ENCODE measurements at regions of chr3 and their contacts with region 1.

Region 1: GRCh38 chr3:141738022-141738890 is at the start of gene RNF7:
- DNase-seq: peak; percentile 95 to 98 (median 98)
- ATAC-seq: peak; percentile 96
- H3K4me3 ChIP-seq: peak within 1 kb of the TSS; percentile 94
- H3K4me3 Mint-ChIP-seq: peak within 1 kb of the TSS; percentile 92 to 100 (median 98)
- H3K27ac ChIP-seq: peak within 1 kb of the TSS; percentile 95
- H3K27ac Mint-ChIP-seq: peak within 1 kb of the TSS; percentile 92 to 99 (median 98)
- H3K4me1 ChIP-seq: peaks cover 20 to 25% of the 10 kb centered on the region in 2 donors
- H3K4me1 Mint-ChIP-seq: peaks cover 21 to 47% (median 44%) of the 10 kb centered on the region in 7 donors
- H3K27me3 ChIP-seq: no peaks in the 10 kb centered on the region
- H3K27me3 Mint-ChIP-seq: peaks cover 0 to 5% (median 0%) of the 10 kb centered on the region in 5 donors
- total RNA-seq, gene RNF7: 45.6 to 63.2 (median 57.3) TPM

Region 2: GRCh38 chr3:140332131-140332530 is 1406.1 kb before region 1 on chr3:
- CTCF ChIA-PET with region 1: no interaction called
- POLR2A ChIA-PET with region 1: no interaction called
- intact Hi-C with region 1: no loop called
- DNase-seq: no peak
- ATAC-seq: no peak
- H3K4me3 ChIP-seq: no peak overlapping the region
- H3K4me3 Mint-ChIP-seq: no peak overlapping the region
- H3K27ac ChIP-seq: no peak overlapping the region
- H3K27ac Mint-ChIP-seq: no peak overlapping the region
- H3K4me1 ChIP-seq: no peaks in the 10 kb centered on the region
- H3K4me1 Mint-ChIP-seq: no peaks in the 10 kb centered on the region
- H3K27me3 ChIP-seq: no peaks in the 10 kb centered on the region
- H3K27me3 Mint-ChIP-seq: peaks cover 5 to 26% (median 12%) of the 10 kb centered on the region in 5 donors

Region 3: GRCh38 chr3:141231101-141231935 is 506.9 kb before region 1 on chr3 and contains the start of gene PXYLP1:
- CTCF ChIA-PET with region 1: no interaction called
- POLR2A ChIA-PET with region 1: no interaction called
- intact Hi-C with region 1: loop called (anchors 1 to 2 kb)
- DNase-seq: peak; percentile 83 to 97 (median 91)
- ATAC-seq: peak; percentile 98
- H3K4me3 ChIP-seq: peak within 1 kb of the TSS; percentile 72
- H3K4me3 Mint-ChIP-seq: peak within 1 kb of the TSS; percentile 85 to 94 (median 92)
- H3K27ac ChIP-seq: peak within 1 kb of the TSS; percentile 85
- H3K27ac Mint-ChIP-seq: peak within 1 kb of the TSS; percentile 91 to 98 (median 98)
- H3K4me1 ChIP-seq: peaks cover 6 to 33% of the 10 kb centered on the region in 2 donors
- H3K4me1 Mint-ChIP-seq: peaks cover 50 to 66% (median 54%) of the 10 kb centered on the region in 7 donors
- H3K27me3 ChIP-seq: no peaks in the 10 kb centered on the region
- H3K27me3 Mint-ChIP-seq: peaks cover 0 to 6% (median 0%) of the 10 kb centered on the region in 5 donors
- total RNA-seq, gene PXYLP1: 18.6 to 40.9 (median 23.2) TPM

Region 4: GRCh38 chr3:141279077-141279967 is 458.9 kb before region 1 on chr3:
- CTCF ChIA-PET with region 1: no interaction called
- POLR2A ChIA-PET with region 1: no interaction called
- intact Hi-C with region 1: no loop called
- DNase-seq: peak in 7 of 9 donors; percentile 23 to 58 (median 46)
- ATAC-seq: peak; percentile 82
- H3K4me3 ChIP-seq: no peak overlapping the region
- H3K4me3 Mint-ChIP-seq: peak overlapping the region in 1 of 10 donors; percentile 17
- H3K27ac ChIP-seq: no peak overlapping the region
- H3K27ac Mint-ChIP-seq: peak overlapping the region in 6 of 9 donors; percentile 1 to 83 (median 44)
- H3K4me1 ChIP-seq: peaks cover 10 to 19% of the 10 kb centered on the region in 2 donors
- H3K4me1 Mint-ChIP-seq: peaks cover 14 to 36% (median 21%) of the 10 kb centered on the region in 7 donors
- H3K27me3 ChIP-seq: no peaks in the 10 kb centered on the region
- H3K27me3 Mint-ChIP-seq: no peaks in the 10 kb centered on the region

Region 5: DNA sequence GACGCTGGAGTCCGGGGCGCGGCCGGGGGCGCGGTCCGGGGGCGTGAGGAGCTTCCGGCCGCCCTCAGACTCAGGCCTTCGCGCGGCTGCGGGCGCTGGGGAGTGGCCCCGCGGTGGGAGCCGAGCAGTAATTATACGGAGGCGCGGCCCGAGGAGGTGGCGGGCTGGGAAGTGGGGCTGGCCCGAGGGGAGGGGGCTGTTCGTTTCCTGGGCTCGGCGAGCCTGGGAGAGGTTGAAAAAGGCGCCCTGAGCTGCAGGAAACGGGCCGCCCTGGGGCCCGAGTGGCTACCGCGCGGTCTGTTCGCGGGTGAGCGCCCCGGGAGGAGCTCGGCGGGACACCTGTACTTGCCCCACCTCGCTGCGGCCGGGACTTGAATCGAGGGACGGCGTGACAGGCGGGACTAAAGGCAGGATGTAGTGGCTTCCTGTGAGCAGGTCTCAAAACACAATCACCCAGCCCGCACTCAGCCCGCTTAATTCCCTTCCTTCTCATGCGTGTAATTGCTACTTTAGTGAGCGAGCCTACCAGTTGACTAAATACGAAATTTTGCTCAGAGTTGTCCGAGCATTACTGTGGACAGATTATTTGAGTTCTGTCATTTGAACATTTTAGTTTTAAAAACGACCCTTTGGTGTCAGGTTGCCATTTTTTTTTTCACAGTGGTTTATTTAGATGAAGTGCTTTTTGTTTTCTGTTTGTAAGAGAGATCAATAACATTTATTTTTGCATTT is 250.6 kb before region 1 on chr3:
- CTCF ChIA-PET with region 1: no interaction called
- POLR2A ChIA-PET with region 1: no interaction called
- intact Hi-C with region 1: loop called (anchors 2 to 10 kb)
- DNase-seq: peak in 8 of 9 donors; percentile 65 to 88 (median 86)
- ATAC-seq: peak; percentile 71
- H3K4me3 ChIP-seq: peak overlapping the region; percentile 65
- H3K4me3 Mint-ChIP-seq: peak overlapping the region; percentile 89 to 97 (median 92)
- H3K27ac ChIP-seq: peak overlapping the region; percentile 94
- H3K27ac Mint-ChIP-seq: peak overlapping the region; percentile 90 to 97 (median 93)
- H3K4me1 ChIP-seq: peaks cover 62% of the 10 kb centered on the region in 2 donors
- H3K4me1 Mint-ChIP-seq: peaks cover 53 to 83% (median 74%) of the 10 kb centered on the region in 7 donors
- H3K27me3 ChIP-seq: no peaks in the 10 kb centered on the region
- H3K27me3 Mint-ChIP-seq: no peaks in the 10 kb centered on the region

Region 6: GRCh38 chr3:141845407-141846049 is 107.3 kb after region 1 on chr3:
- CTCF ChIA-PET with region 1: interaction called, 5 read pairs
- POLR2A ChIA-PET with region 1: interaction called, 9 read pairs
- intact Hi-C with region 1: loop called (anchors 1 kb)
- DNase-seq: peak in 7 of 9 donors; percentile 10 to 46 (median 25)
- ATAC-seq: peak; percentile 55
- H3K4me3 ChIP-seq: no peak overlapping the region
- H3K4me3 Mint-ChIP-seq: no peak overlapping the region
- H3K27ac ChIP-seq: no peak overlapping the region
- H3K27ac Mint-ChIP-seq: peak overlapping the region in 2 of 9 donors; percentile 36 to 42
- H3K4me1 ChIP-seq: no peaks in the 10 kb centered on the region
- H3K4me1 Mint-ChIP-seq: peaks cover 4 to 18% (median 9%) of the 10 kb centered on the region in 7 donors
- H3K27me3 ChIP-seq: no peaks in the 10 kb centered on the region
- H3K27me3 Mint-ChIP-seq: peaks cover 0 to 6% (median 5%) of the 10 kb centered on the region in 5 donors

Region 7: GRCh38 chr3:142028243-142028777 is 290.1 kb after region 1 on chr3:
- CTCF ChIA-PET with region 1: no interaction called
- POLR2A ChIA-PET with region 1: no interaction called
- intact Hi-C with region 1: loop called in 1 of 2 experiments (anchors 2 kb)
- DNase-seq: peak in 7 of 9 donors; percentile 45 to 72 (median 63)
- ATAC-seq: peak; percentile 90
- H3K4me3 ChIP-seq: peak overlapping the region; percentile 47
- H3K4me3 Mint-ChIP-seq: peak overlapping the region; percentile 81 to 97 (median 90)
- H3K27ac ChIP-seq: peak overlapping the region; percentile 57
- H3K27ac Mint-ChIP-seq: peak overlapping the region; percentile 49 to 92 (median 82)
- H3K4me1 ChIP-seq: no peaks in the 10 kb centered on the region
- H3K4me1 Mint-ChIP-seq: peaks cover 13 to 50% (median 49%) of the 10 kb centered on the region in 7 donors
- H3K27me3 ChIP-seq: no peaks in the 10 kb centered on the region
- H3K27me3 Mint-ChIP-seq: no peaks in the 10 kb centered on the region

Region 8: DNA sequence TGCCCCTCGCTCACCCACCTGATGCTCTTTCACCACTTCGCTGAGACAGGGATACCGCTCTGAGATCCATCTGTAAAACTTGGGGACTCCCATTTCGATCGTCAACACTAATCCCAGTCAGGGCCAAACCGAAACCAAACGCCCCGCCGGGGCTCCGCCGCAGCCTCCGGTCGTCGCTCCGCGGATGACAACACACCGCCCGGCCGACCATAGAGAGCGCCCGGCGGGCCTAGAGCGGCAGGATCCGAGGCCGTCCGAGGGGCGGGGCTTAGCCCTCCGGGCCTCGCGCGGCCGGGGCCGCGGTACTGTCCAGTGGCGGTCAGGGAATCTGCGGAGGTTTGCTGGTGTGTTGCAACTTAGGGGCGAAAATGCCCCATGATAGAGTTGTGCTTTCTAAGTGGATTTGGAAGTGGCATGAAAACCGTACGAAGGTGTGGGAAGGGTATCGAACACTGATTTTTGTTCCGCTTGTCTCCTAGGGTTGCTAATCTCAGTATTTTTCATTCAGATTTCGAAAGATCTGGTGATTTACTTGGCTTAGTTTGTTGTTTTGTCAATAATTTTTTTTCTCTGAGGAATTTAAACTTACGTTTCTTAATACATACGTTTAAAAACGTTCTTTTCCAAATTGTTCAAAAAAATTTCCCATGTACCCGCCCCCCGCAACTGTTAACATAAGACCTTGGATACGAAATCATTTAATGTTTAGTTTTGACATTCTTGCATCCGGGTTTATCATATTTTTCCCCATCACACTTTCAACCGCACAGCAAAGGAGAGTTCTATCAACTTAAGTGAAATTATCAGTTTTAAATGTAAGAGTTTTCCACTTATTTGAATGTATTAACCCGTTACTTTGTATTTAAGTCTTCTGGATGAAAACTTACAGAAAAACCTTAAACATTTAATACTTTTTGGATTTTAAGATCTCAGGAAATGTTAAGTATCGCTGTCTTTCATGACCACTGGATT is 709.9 kb after region 1 on chr3 and contains the start of gene XRN1:
- CTCF ChIA-PET with region 1: no interaction called
- POLR2A ChIA-PET with region 1: interaction called, 4 read pairs
- intact Hi-C with region 1: loop called (anchors 1 kb)
- DNase-seq: peak; percentile 90 to 97 (median 94)
- ATAC-seq: peak; percentile 99
- H3K4me3 ChIP-seq: peak within 1 kb of the TSS; percentile 78
- H3K4me3 Mint-ChIP-seq: peak within 1 kb of the TSS; percentile 89 to 100 (median 98)
- H3K27ac ChIP-seq: peak within 1 kb of the TSS; percentile 99
- H3K27ac Mint-ChIP-seq: peak within 1 kb of the TSS; percentile 98 to 100 (median 99)
- H3K4me1 ChIP-seq: peaks cover 31% of the 10 kb centered on the region in 2 donors
- H3K4me1 Mint-ChIP-seq: peaks cover 26 to 55% (median 51%) of the 10 kb centered on the region in 7 donors
- H3K27me3 ChIP-seq: no peaks in the 10 kb centered on the region
- H3K27me3 Mint-ChIP-seq: no peaks in the 10 kb centered on the region
- total RNA-seq, gene XRN1: 86.1 to 123 (median 103) TPM

Measured in naive thymus-derived CD4-positive, alpha-beta T cell (primary cell).